ENCODE measurements at regions of chr1 and their contacts with region 1.

Region 1: DNA sequence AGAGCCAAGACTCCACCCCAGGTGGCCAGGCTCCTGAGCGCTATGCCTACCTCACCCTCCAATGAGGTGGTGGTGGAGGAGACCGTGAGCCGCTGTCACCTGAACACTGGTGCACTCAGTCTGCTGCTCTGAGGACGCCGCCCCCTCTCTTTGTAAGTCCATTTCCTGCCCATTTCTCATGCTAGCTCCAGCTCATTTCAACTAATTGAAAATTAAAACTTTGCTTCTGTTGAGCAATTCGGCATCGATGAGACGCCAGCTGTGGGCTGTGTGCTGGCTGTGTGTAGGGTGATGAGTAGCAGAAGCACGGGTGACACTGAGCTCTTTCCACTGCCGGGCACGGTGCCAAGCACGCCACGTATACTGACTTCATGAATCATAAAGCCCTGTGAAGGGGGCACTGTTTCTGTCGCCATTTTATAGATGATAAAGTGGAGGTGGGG is 11.2 kb downstream of the TNFRSF1B start:
- DNase-seq: peak; percentile 97
- H3K4me3 Mint-ChIP-seq: peak overlapping the region; percentile 54
- H3K27ac Mint-ChIP-seq: peak overlapping the region; percentile 94
- H3K4me1 Mint-ChIP-seq: peaks cover 94% of the 10 kb centered on the region
- H3K27me3 Mint-ChIP-seq: no peaks in the 10 kb centered on the region

Region 2: GRCh38 chr1:11805447-11806306 is 372.3 kb before region 1 on chr1 and contains the starts of genes CLCN6 and MTHFR:
- CTCF ChIA-PET with region 1: no interaction called
- POLR2A ChIA-PET with region 1: no interaction called
- intact Hi-C with region 1: loop called (anchors 5 kb)
- DNase-seq: peak; percentile 99
- H3K4me3 Mint-ChIP-seq: peak within 1 kb of the TSS; percentile 84
- H3K27ac Mint-ChIP-seq: peak within 1 kb of the TSS; percentile 88
- H3K4me1 Mint-ChIP-seq: peaks cover 51% of the 10 kb centered on the region
- H3K27me3 Mint-ChIP-seq: no peaks in the 10 kb centered on the region
- total RNA-seq, gene CLCN6: 11.3 to 11.6 TPM
- total RNA-seq, gene MTHFR: 12.8 to 13.3 TPM

Region 3: DNA sequence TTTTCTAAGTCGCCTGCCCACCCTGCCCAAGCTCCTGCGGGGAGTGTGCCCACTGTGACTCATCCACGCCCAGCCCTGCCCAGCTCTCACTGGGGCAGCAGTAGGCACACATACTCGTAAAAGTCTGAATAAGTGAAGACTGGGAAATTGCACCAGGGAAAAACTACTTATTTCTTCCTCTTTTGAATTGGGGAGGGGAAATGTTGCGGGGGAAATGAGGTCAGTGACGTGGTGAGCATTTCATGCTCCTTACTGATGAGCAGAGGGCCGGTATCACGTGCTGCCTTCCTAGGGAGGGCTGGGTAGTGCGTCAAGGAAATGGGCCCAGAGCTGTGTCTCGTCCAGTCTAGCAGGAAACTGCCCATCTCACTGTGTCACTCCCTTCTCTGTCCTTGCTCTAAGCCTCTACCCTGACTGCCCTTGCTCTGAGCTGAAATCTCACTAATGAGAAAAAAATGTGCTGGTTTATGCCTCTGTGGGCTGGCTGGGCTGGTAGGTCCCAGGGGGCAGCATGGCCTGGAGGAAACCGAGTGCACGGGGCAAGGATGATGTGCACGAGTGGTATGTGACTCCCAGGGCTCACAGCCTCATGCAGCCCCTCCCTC is 24.7 kb before region 1 on chr1:
- CTCF ChIA-PET with region 1: interaction called, 3 read pairs
- POLR2A ChIA-PET with region 1: interaction called, 28 read pairs
- intact Hi-C with region 1: loop called (anchors 1 kb)
- DNase-seq: peak; percentile 65
- H3K4me3 Mint-ChIP-seq: no peak overlapping the region
- H3K27ac Mint-ChIP-seq: peak overlapping the region; percentile 90
- H3K4me1 Mint-ChIP-seq: peaks cover 88% of the 10 kb centered on the region
- H3K27me3 Mint-ChIP-seq: no peaks in the 10 kb centered on the region

Region 4: GRCh38 chr1:12166834-12167492 is 11.1 kb before region 1 on chr1 and contains the start of gene TNFRSF1B:
- CTCF ChIA-PET with region 1: interaction called, 19 read pairs
- POLR2A ChIA-PET with region 1: interaction called, 26 read pairs
- intact Hi-C with region 1: loop called (anchors 1 kb)
- DNase-seq: peak; percentile 80
- H3K4me3 Mint-ChIP-seq: peak within 1 kb of the TSS; percentile 98
- H3K27ac Mint-ChIP-seq: peak within 1 kb of the TSS; percentile 97
- H3K4me1 Mint-ChIP-seq: peaks cover 66% of the 10 kb centered on the region
- H3K27me3 Mint-ChIP-seq: no peaks in the 10 kb centered on the region
- total RNA-seq, gene TNFRSF1B: 201 to 211 TPM

Region 5: DNA sequence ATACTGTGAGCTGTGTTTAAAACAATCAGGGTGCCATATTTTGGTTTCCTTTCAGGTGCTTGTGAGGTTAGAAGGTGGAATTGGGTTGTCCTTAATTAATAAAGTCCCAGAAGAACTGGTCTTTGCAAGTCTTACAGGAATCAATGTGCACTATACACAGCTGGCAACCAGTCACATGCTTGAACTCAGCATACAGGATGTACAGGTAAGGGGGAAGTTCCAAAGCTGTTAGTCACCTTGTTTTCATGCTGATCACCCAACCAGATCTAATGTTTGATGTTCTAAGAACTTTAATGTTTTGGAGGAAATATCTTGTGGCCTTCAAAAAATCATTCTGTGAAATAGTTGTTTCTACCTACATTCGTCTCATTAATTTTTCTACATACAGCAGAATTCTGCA is 208.1 kb after region 1 on chr1:
- CTCF ChIA-PET with region 1: no interaction called
- POLR2A ChIA-PET with region 1: no interaction called
- intact Hi-C with region 1: loop called (anchors 10 kb)
- DNase-seq: peak; percentile 39
- H3K4me3 Mint-ChIP-seq: no peak overlapping the region
- H3K27ac Mint-ChIP-seq: peak overlapping the region; percentile 69
- H3K4me1 Mint-ChIP-seq: peaks cover 44% of the 10 kb centered on the region
- H3K27me3 Mint-ChIP-seq: no peaks in the 10 kb centered on the region

Region 6: GRCh38 chr1:12518931-12519692 is 341.1 kb after region 1 on chr1:
- CTCF ChIA-PET with region 1: no interaction called
- POLR2A ChIA-PET with region 1: no interaction called
- intact Hi-C with region 1: loop called (anchors 10 kb)
- DNase-seq: peak; percentile 80
- H3K4me3 Mint-ChIP-seq: no peak overlapping the region
- H3K27ac Mint-ChIP-seq: peak overlapping the region; percentile 45
- H3K4me1 Mint-ChIP-seq: peaks cover 28% of the 10 kb centered on the region
- H3K27me3 Mint-ChIP-seq: no peaks in the 10 kb centered on the region